H1 (cell line): ENCODE measurements at regions of chr16 and their contacts with region 1.

Region 1: GRCh38 chr16:4203748-4204147 is 38.1 kb downstream of the SRL start:
- DNase-seq: no peak
- H3K4me3 ChIP-seq: no peak overlapping the region
- H3K27ac ChIP-seq: no peak overlapping the region
- H3K4me1 ChIP-seq: peaks cover 0 to 6% (median 2%) of the 10 kb centered on the region in 4 experiments; a peak in 4 of 7 replicates
- H3K27me3 ChIP-seq: no peaks in the 10 kb centered on the region; a peak in 1 of 7 replicates
- CTCF ChIP-seq: no peak
- EP300 ChIP-seq: no peak
- POLR2A ChIP-seq: no peak
- RAD21 ChIP-seq: no peak

Region 2: GRCh38 chr16:4166821-4167220 is 36.9 kb before region 1 on chr16:
- CTCF ChIA-PET with region 1: no interaction called
- POLR2A ChIA-PET with region 1: no interaction called
- DNase-seq: no peak
- H3K4me3 ChIP-seq: no peak overlapping the region
- H3K27ac ChIP-seq: no peak overlapping the region
- H3K4me1 ChIP-seq: no peaks in the 10 kb centered on the region
- H3K27me3 ChIP-seq: no peaks in the 10 kb centered on the region
- CTCF ChIP-seq: no peak
- EP300 ChIP-seq: no peak
- POLR2A ChIP-seq: no peak
- RAD21 ChIP-seq: no peak

Region 3: DNA sequence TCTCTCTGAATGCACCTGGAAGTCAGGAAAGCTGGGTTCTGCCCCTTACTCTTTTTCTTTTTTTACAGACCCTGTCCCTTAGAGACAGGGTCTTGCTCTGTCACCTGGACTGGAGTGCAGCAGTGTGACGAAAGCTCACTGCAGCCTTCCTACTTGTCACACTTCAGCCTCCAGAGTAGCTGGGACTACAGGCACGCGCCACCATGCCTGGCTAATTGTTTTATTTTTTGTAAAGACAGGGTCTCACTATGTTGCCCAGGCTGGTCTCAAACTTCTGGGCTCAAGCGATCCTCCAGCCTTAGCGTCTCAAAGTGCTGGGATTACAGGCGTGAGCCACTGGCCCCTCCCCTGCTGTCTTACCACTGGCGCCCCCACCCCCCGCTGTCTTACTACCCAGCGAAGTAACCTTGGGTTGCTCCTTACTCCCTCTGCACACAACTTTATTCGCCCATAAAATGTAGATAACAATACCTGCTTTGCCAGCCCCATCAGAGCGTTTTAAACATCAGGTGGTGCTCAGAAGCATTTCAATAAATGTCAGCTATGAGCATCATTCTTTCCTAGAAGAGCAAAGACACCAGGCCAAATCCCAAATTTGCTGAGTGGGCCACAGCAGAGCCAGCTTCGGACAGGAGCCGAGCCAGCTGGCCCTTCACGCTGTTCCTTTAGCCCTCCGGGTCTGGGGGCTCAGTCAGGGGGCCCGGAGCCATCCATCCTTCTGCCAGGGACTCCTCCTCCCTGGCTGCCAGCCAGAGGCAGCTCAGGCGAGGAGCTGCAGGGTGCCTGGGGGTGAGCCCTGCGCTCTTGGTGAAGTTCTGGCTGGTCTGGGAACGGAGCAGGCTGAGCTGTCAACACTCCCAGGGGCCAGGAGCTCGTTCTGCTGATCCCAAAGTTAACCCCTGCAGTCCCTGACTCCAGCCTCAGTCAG is 13.7 kb after region 1 on chr16:
- CTCF ChIA-PET with region 1: interaction called, 13 read pairs
- POLR2A ChIA-PET with region 1: interaction called, 6 read pairs
- DNase-seq: no peak
- H3K4me3 ChIP-seq: peak overlapping the region in 1 of 4 experiments; percentile 8; a peak in 1 of 8 replicates
- H3K27ac ChIP-seq: no peak overlapping the region
- H3K4me1 ChIP-seq: peaks cover 6 to 17% (median 8%) of the 10 kb centered on the region in 4 experiments
- H3K27me3 ChIP-seq: no peaks in the 10 kb centered on the region
- CTCF ChIP-seq: no peak
- EP300 ChIP-seq: no peak
- POLR2A ChIP-seq: no peak
- RAD21 ChIP-seq: no peak